Activated naive CD4-positive, alpha-beta T cell treated with anti-CD3 and anti-CD28 coated beads for 36 hours (primary cell): ENCODE measurements at regions of chr12 and their contacts with region 1.

Region 1: GRCh38 chr12:92145731-92146496 is at the start of gene BTG1:
- DNase-seq: peak; percentile 100
- H3K4me3 Mint-ChIP-seq: peak within 1 kb of the TSS; percentile 100
- H3K27ac Mint-ChIP-seq: peak within 1 kb of the TSS; percentile 100
- H3K4me1 Mint-ChIP-seq: peaks cover 27% of the 10 kb centered on the region
- H3K27me3 Mint-ChIP-seq: no peaks in the 10 kb centered on the region
- total RNA-seq, gene BTG1: 218 to 223 TPM

Region 2: GRCh38 chr12:91382081-91382543 is 763.8 kb before region 1 on chr12:
- CTCF ChIA-PET with region 1: interaction called, 4 read pairs
- intact Hi-C with region 1: loop called (anchors 2 kb)
- DNase-seq: peak; percentile 92
- H3K4me3 Mint-ChIP-seq: peak overlapping the region; percentile 76
- H3K27ac Mint-ChIP-seq: no peak overlapping the region
- H3K4me1 Mint-ChIP-seq: peaks cover 5% of the 10 kb centered on the region
- H3K27me3 Mint-ChIP-seq: no peaks in the 10 kb centered on the region

Region 3: GRCh38 chr12:91811481-91812287 is 334.2 kb before region 1 on chr12:
- CTCF ChIA-PET with region 1: no interaction called
- intact Hi-C with region 1: loop called (anchors 2 kb)
- DNase-seq: peak; percentile 86
- H3K4me3 Mint-ChIP-seq: peak overlapping the region; percentile 23
- H3K27ac Mint-ChIP-seq: peak overlapping the region; percentile 76
- H3K4me1 Mint-ChIP-seq: peaks cover 21% of the 10 kb centered on the region
- H3K27me3 Mint-ChIP-seq: no peaks in the 10 kb centered on the region

Region 4: DNA sequence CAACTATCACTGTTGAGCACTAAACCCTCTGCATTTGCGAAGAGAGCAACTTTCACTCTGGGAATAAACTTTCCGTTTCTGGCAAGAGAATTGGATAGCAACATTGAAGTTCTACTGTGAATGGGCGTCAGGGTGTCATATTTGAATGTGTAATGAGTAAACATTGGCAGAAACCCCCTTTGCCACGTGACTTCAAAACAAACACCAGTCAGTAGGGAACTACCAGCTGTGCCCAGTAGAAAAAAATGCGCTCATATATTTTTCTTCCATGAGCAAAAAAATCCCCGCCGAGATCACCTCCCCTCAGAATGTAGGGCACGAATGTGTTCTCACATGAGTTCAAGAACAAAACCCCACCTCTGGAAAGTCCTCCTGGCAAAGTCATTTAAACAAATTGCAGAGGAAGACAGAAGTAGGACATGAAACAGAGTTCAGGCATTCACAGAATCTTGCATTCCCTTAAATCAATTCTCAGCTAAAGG is 80.9 kb before region 1 on chr12:
- CTCF ChIA-PET with region 1: no interaction called
- intact Hi-C with region 1: loop called (anchors 1 kb)
- DNase-seq: peak; percentile 86
- H3K4me3 Mint-ChIP-seq: peak overlapping the region; percentile 22
- H3K27ac Mint-ChIP-seq: peak overlapping the region; percentile 84
- H3K4me1 Mint-ChIP-seq: peaks cover 65% of the 10 kb centered on the region
- H3K27me3 Mint-ChIP-seq: no peaks in the 10 kb centered on the region

Region 5: GRCh38 chr12:92208613-92209121 is 62.8 kb after region 1 on chr12:
- CTCF ChIA-PET with region 1: interaction called, 4 read pairs
- intact Hi-C with region 1: loop called (anchors 1 kb)
- DNase-seq: peak; percentile 42
- H3K4me3 Mint-ChIP-seq: peak overlapping the region; percentile 66
- H3K27ac Mint-ChIP-seq: peak overlapping the region; percentile 86
- H3K4me1 Mint-ChIP-seq: peaks cover 45% of the 10 kb centered on the region
- H3K27me3 Mint-ChIP-seq: no peaks in the 10 kb centered on the region

Region 6: DNA sequence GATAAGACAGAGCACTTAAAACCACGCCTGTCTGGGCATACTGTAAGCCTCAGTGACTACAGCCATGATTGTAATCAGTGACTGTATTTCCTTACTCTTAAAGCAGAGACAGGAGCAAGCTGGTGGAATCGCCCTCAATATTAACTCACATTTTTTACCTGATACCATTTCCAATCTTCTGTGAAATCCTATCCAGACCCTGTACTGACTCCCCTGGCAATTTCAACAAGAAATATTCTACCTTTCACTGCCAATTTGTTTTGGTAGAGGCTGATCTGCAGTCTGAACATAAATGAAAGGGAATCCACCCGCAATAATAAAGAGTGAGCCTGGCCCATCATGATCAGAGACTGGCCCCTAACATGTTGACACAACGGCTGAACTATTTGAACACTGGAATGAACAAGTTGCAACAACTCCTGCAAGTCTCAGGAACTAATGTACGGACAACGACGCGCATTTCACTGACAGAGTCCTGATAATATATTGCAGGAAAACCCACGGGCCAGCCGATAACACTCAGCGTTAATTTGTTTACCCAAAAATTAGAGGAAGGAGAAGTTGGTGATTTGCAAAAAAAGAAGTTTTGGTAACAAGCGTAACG is 195.3 kb after region 1 on chr12:
- CTCF ChIA-PET with region 1: no interaction called
- intact Hi-C with region 1: no loop called
- DNase-seq: no peak
- H3K4me3 Mint-ChIP-seq: peak overlapping the region; percentile 53
- H3K27ac Mint-ChIP-seq: peak overlapping the region; percentile 55
- H3K4me1 Mint-ChIP-seq: peaks cover 18% of the 10 kb centered on the region
- H3K27me3 Mint-ChIP-seq: no peaks in the 10 kb centered on the region

Region 7: DNA sequence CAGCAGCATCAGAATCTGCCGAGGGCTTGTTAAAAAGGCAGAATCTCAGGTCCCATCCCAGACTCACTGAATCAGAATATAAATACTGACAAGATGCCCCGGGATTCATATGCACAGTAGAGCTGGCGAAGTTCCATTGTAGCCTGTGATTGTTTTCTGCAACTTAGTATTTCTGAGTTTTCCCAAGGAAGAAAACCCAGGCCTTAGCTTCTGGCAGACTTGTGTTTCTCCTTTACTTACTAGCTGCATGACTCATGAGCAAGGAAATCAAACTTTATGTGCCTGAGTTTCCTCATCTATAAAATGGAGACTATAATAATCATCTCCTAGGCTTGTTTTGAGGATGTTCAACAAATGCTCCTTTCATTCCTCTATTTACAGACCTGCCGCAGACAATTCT is 278.4 kb after region 1 on chr12:
- CTCF ChIA-PET with region 1: no interaction called
- intact Hi-C with region 1: no loop called
- DNase-seq: no peak
- H3K4me3 Mint-ChIP-seq: no peak overlapping the region
- H3K27ac Mint-ChIP-seq: no peak overlapping the region
- H3K4me1 Mint-ChIP-seq: peaks cover 53% of the 10 kb centered on the region
- H3K27me3 Mint-ChIP-seq: no peaks in the 10 kb centered on the region

Region 8: DNA sequence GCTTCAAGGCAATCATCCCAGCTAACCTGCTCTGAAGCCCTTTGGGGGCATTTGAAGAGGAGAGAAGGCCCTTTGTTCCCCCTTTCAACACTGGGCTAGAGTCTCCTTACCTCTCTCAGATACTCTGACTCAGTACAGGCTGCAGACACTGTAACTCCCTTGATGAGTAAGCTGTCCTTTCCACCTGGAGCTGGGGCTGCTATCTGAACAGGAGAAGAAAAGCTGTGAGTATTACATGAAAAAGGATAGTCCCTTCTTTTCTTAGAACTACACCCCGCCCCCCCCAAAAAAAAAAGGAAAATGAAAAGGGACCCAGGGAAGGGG is 370.3 kb after region 1 on chr12:
- CTCF ChIA-PET with region 1: no interaction called
- intact Hi-C with region 1: no loop called
- DNase-seq: peak; percentile 72
- H3K4me3 Mint-ChIP-seq: peak overlapping the region; percentile 61
- H3K27ac Mint-ChIP-seq: peak overlapping the region; percentile 92
- H3K4me1 Mint-ChIP-seq: peaks cover 46% of the 10 kb centered on the region
- H3K27me3 Mint-ChIP-seq: no peaks in the 10 kb centered on the region

Region 9: GRCh38 chr12:92570056-92570753 is 424.3 kb after region 1 on chr12:
- CTCF ChIA-PET with region 1: interaction called, 4 read pairs
- intact Hi-C with region 1: loop called (anchors 1 kb)
- DNase-seq: peak; percentile 67
- H3K4me3 Mint-ChIP-seq: no peak overlapping the region
- H3K27ac Mint-ChIP-seq: no peak overlapping the region
- H3K4me1 Mint-ChIP-seq: peaks cover 32% of the 10 kb centered on the region
- H3K27me3 Mint-ChIP-seq: no peaks in the 10 kb centered on the region